Caco-2 (cell line): ENCODE measurements at regions of chr11 and their contacts with region 1.

Region 1: DNA sequence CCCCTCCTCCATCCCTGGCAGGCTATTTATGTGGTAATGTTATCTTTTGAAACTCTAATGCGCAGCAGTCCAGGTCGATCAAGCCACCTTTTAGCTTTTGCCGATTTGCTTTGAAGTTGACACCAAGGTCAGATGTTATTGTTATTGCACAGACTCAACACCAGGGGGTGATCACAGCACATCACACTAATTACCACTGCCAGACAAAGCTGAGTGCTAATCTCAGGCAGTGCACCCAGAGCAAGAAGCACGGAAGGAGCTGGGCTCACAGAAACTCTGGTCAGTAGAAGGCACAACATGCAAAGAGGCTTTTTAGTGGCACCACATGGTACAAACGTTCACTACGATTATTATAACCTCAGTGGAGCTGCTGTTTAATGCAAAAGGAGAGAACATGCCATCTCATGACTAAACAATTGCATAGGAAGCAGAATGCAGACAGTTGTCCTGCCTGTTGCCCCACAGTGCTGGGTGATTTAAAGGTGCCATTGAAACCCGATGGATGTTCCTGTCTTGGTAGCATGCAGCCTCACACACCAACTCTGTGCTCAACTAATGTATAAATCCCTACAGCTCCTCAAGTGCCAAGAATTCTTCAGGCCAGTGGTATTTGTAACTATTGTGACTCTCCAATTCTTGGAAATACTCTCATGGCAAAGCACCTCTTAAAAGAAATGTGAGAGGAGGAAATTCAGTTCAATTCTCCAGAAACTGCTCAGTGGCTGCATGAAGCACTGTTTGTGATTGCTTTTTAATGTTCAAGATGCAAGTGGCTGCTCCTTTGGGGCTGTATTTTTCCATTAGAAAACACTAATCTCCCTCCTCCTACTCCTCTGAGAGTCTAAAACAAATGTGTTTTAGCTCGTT is 353.9 kb upstream of the DDI1 start:
- DNase-seq: peak; percentile 80 to 82
- H3K4me3 ChIP-seq: no peak overlapping the region
- H3K4me3 Mint-ChIP-seq: no peak overlapping the region
- H3K27ac Mint-ChIP-seq: no peak overlapping the region
- H3K4me1 ChIP-seq: no peaks in the 10 kb centered on the region
- H3K4me1 Mint-ChIP-seq: peaks cover 7% of the 10 kb centered on the region
- H3K27me3 ChIP-seq: no peaks in the 10 kb centered on the region
- H3K27me3 Mint-ChIP-seq: peaks cover 3% of the 10 kb centered on the region
- CTCF ChIP-seq: peak; percentile 90 to 96

Region 2: GRCh38 chr11:103709371-103709770 is 26.8 kb after region 1 on chr11:
- CTCF ChIA-PET with region 1: no interaction called
- POLR2A ChIA-PET with region 1: no interaction called
- intact Hi-C with region 1: no loop called
- DNase-seq: no peak
- H3K4me3 ChIP-seq: no peak overlapping the region
- H3K4me3 Mint-ChIP-seq: no peak overlapping the region
- H3K27ac Mint-ChIP-seq: no peak overlapping the region
- H3K4me1 ChIP-seq: no peaks in the 10 kb centered on the region
- H3K4me1 Mint-ChIP-seq: no peaks in the 10 kb centered on the region
- H3K27me3 ChIP-seq: no peaks in the 10 kb centered on the region
- H3K27me3 Mint-ChIP-seq: peaks cover 7% of the 10 kb centered on the region
- CTCF ChIP-seq: no peak

Region 3: DNA sequence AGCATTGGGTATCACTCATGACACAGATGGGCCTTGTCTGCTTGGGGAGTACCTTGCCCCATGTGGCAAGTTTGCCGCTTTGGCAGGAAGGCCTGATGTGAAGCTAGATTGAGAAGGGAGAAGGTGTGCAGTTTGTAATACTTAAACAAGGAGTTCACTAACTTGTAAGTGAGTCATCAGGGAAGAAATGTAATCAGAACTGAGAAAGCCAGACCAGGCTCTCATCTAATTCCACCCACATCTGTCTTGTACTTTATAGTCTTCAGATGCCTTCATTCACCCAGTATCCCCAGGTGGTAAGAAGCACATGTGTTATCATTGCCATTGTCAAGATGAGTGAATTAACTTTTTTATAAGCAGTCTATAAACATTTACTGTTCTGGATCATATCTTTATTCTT is 237.9 kb after region 1 on chr11:
- CTCF ChIA-PET with region 1: interaction called, 7 read pairs
- POLR2A ChIA-PET with region 1: no interaction called
- intact Hi-C with region 1: loop called (anchors 1 kb)
- DNase-seq: no peak
- H3K4me3 ChIP-seq: no peak overlapping the region
- H3K4me3 Mint-ChIP-seq: no peak overlapping the region
- H3K27ac Mint-ChIP-seq: no peak overlapping the region
- H3K4me1 ChIP-seq: peaks cover 49% of the 10 kb centered on the region
- H3K4me1 Mint-ChIP-seq: peaks cover 33% of the 10 kb centered on the region
- H3K27me3 ChIP-seq: no peaks in the 10 kb centered on the region
- H3K27me3 Mint-ChIP-seq: peaks cover 4% of the 10 kb centered on the region
- CTCF ChIP-seq: no peak

Region 4: GRCh38 chr11:104151404-104152204 is 469.1 kb after region 1 on chr11:
- CTCF ChIA-PET with region 1: interaction called, 11 read pairs
- POLR2A ChIA-PET with region 1: no interaction called
- intact Hi-C with region 1: loop called (anchors 1 kb)
- DNase-seq: no peak
- H3K4me3 ChIP-seq: no peak overlapping the region
- H3K4me3 Mint-ChIP-seq: no peak overlapping the region
- H3K27ac Mint-ChIP-seq: no peak overlapping the region
- H3K4me1 ChIP-seq: 0 out of 2 replicates have a peak, but pooled peaks cover 3% of the 10 kb centered on the region
- H3K4me1 Mint-ChIP-seq: no peaks in the 10 kb centered on the region
- H3K27me3 ChIP-seq: no peaks in the 10 kb centered on the region
- H3K27me3 Mint-ChIP-seq: no peaks in the 10 kb centered on the region
- CTCF ChIP-seq: peak; percentile 25 to 33

Region 5: GRCh38 chr11:104254347-104254746 is 571.8 kb after region 1 on chr11:
- CTCF ChIA-PET with region 1: interaction called, 6 read pairs
- POLR2A ChIA-PET with region 1: no interaction called
- intact Hi-C with region 1: loop called (anchors 1 kb)
- DNase-seq: peak; percentile 59 to 67
- H3K4me3 ChIP-seq: no peak overlapping the region
- H3K4me3 Mint-ChIP-seq: no peak overlapping the region
- H3K27ac Mint-ChIP-seq: no peak overlapping the region
- H3K4me1 ChIP-seq: peaks cover 6% of the 10 kb centered on the region
- H3K4me1 Mint-ChIP-seq: peaks cover 16% of the 10 kb centered on the region
- H3K27me3 ChIP-seq: no peaks in the 10 kb centered on the region
- H3K27me3 Mint-ChIP-seq: no peaks in the 10 kb centered on the region
- CTCF ChIP-seq: peak; percentile 63 to 73